PC-3 (cell line): ENCODE measurements at regions of chr1 and their contacts with region 1.

Region 1: DNA sequence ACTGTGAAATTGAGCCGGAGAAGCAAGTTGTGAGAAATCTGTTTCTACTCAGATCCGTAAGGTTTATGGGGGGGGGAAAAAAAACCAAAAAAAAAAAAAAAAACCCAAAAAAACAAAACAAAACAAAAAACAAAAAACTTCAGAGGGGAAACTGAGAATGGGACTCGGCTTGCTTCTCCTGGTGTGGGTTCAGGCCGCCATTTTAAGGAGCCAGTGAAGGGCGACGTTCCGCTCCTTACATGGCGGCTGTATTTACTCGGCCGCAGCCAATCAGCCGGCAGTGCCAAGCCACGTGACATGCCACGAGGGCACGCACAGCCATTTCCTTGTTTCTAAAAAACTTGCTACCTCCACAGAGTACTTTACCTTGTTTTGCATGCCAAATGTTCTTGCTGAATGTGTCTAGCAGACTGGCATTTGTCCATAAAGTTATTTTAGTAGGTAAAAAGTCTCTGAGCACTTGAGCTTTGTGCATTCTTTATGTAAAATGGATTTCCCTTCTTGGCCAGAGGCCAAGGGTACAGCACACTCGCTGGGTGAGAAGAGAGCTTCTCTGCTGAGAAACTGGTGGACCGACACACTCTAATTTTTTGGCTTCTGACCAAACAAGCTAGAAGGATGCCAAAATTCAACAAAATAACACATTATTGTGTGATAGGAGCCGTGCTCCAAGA is 101.8 kb downstream of the NFIA start:
- DNase-seq: peak; percentile 56
- ATAC-seq: no peak
- H3K4me3 ChIP-seq: no peak overlapping the region
- H3K27ac ChIP-seq: no peak overlapping the region
- H3K4me1 ChIP-seq: peaks cover 11% of the 10 kb centered on the region
- H3K27me3 ChIP-seq: no peaks in the 10 kb centered on the region
- CTCF ChIP-seq: no peak

Region 2: DNA sequence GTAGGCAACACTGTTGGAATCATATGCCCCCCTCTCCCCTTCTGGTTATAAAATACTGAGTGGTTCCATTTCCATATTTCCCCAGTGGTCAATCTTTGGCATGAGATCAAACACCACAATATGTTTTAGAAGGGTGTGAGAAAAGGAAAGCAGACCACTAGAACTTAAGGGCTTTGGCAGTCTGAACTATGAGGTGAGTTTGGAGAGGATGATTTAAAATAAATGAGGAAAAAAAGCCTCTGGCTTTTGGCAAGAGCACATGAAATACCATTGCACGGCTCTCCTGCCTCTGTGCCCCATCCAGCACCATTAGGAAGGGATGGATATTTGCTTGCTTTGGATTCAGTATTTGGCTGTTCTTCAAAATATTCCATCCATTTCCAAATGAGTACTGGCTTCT is 771.1 kb before region 1 on chr1:
- CTCF ChIA-PET with region 1: no interaction called
- POLR2A ChIA-PET with region 1: no interaction called
- intact Hi-C with region 1: no loop called
- DNase-seq: no peak
- ATAC-seq: no peak
- H3K4me3 ChIP-seq: no peak overlapping the region
- H3K27ac ChIP-seq: no peak overlapping the region
- H3K4me1 ChIP-seq: no peaks in the 10 kb centered on the region
- H3K27me3 ChIP-seq: peaks cover 24% of the 10 kb centered on the region; the same call in 1 of the 2 replicates
- CTCF ChIP-seq: no peak

Region 3: GRCh38 chr1:61077676-61078541 is 106.3 kb before region 1 on chr1:
- CTCF ChIA-PET with region 1: no interaction called
- POLR2A ChIA-PET with region 1: no interaction called
- intact Hi-C with region 1: no loop called
- DNase-seq: peak; percentile 99
- ATAC-seq: peak; percentile 45
- H3K4me3 ChIP-seq: peak overlapping the region; percentile 76
- H3K27ac ChIP-seq: peak overlapping the region; percentile 90
- H3K4me1 ChIP-seq: peaks cover 42% of the 10 kb centered on the region
- H3K27me3 ChIP-seq: no peaks in the 10 kb centered on the region
- CTCF ChIP-seq: no peak

Region 4: DNA sequence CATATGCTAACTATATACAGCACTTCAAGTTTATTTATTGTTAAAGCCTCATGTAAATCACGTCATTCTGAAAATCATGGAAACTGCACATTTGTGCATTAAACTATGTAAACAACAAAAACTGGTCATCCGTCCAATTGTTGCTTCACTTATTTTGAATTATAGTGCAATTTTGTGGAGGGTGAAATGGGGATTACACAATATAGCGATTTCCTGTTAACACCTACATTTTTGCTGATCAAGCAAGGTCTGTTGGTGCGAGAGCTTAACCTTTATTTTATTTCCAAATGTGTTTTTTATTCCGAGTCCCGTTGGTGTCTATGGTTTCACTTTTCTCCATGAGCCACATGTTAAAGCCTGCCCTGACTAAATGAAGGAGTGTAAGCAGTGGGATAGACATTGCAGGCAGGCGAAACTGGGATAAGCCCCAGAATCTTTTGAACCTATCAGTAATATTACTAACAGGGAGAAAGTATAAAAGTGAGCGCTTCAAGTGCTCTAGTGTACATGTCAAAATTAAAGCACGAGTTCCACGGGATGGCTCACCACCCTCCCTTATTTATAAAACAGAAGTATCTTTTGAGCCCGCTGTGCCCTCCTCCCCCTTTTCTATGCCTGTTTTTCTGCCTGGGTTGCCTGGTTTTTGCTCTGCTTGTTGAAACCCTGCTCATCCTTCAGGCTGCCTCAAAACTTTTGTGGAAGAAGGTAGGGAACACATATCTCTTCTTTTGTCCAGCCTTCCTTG is 18.8 kb after region 1 on chr1:
- CTCF ChIA-PET with region 1: no interaction called
- POLR2A ChIA-PET with region 1: interaction called, 15 read pairs
- intact Hi-C with region 1: no loop called
- DNase-seq: no peak
- ATAC-seq: no peak
- H3K4me3 ChIP-seq: no peak overlapping the region
- H3K27ac ChIP-seq: no peak overlapping the region
- H3K4me1 ChIP-seq: no peaks in the 10 kb centered on the region
- H3K27me3 ChIP-seq: no peaks in the 10 kb centered on the region
- CTCF ChIP-seq: no peak

Region 5: DNA sequence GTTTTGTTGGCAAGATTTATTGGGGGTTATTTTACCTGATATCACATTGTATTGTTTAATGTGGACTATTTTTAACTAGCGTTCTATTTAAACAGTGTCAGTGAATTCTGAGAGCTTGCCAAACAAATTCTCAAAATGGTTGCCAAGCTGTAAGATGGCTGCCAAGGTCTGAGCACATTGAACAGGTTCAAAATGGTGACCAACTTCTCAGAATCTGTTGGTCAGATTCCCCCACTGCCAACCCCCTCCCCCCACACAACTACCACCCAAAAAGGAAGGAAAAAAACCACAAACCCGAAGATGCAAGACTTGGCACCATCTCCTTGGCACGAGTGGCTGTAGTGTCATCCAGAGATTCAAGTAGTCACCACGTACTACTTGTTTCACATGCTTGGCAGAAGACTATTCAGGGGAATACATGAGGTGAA is 57.2 kb after region 1 on chr1:
- CTCF ChIA-PET with region 1: no interaction called
- POLR2A ChIA-PET with region 1: no interaction called
- intact Hi-C with region 1: no loop called
- DNase-seq: peak; percentile 37
- ATAC-seq: 0 out of 2 replicates have a peak, but pooled peaks have one; percentile 18
- H3K4me3 ChIP-seq: no peak overlapping the region
- H3K27ac ChIP-seq: no peak overlapping the region
- H3K4me1 ChIP-seq: peaks cover 45% of the 10 kb centered on the region
- H3K27me3 ChIP-seq: no peaks in the 10 kb centered on the region
- CTCF ChIP-seq: no peak